Activated CD8-positive, alpha-beta memory T cell treated with anti-CD3 and anti-CD28 coated beads, Interleukin-2, amount 10 ng/mL, durations not matched to agents 7 days and 5 days (primary cell): ENCODE measurements at regions of chr2 and their contacts with region 1.

Region 1: DNA sequence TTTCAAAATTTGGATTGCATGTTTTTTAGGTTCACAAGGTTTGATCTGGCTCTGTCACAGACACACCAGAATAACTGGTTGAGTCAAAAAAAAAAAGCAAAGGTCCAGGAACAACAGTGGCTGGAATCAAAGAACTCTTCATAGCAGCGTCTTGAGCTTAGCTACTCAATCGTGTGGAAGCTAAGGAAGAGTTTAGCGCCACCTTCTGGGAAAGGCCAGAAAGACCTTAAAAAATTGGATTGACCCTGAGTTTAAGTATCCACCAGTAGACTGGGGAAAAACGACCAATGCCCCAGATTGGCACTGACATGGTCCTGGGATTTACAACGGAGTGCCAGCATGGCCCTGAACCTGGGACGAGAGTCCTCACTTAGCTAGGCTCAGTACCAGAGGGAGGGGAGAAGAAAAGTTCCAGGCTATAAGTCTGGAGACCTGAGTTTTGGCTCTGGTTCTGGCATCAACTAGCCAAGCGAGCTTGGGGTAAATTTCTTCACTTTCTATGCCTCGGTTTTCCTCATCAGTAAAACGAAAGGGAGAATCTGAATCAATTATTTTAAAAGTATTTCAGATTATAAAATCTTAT is 71.1 kb upstream of the TFCP2L1 start:
- DNase-seq: no peak
- ATAC-seq: peak; percentile 58
- H3K4me3 Mint-ChIP-seq: no peak overlapping the region
- H3K27ac Mint-ChIP-seq: no peak overlapping the region
- H3K4me1 Mint-ChIP-seq: peaks cover 6% of the 10 kb centered on the region
- H3K27me3 Mint-ChIP-seq: no peaks in the 10 kb centered on the region

Region 2: DNA sequence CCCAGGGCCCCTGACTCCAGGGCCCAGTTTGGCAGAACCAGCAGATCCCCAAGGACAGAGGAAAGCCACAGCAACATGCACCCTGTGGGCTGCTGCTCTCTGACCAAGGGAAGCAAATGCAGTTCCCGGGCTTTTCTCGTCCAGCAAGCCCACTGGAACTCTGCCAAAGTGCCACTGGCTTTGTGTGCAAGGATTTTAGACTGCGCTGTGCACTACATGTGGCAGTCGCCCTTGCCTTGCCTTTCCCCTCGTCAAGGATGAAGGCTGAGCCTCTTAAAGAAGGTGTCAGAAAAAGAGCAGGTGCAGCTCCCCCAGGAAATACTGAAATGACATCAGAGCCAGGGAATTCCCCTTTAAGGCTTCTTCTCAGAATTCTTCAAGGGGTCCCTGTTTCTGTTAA is 270.3 kb before region 1 on chr2:
- CTCF ChIA-PET with region 1: interaction called, 17 read pairs
- DNase-seq: no peak
- ATAC-seq: no peak
- H3K4me3 Mint-ChIP-seq: no peak overlapping the region
- H3K27ac Mint-ChIP-seq: no peak overlapping the region
- H3K4me1 Mint-ChIP-seq: peaks cover 2% of the 10 kb centered on the region
- H3K27me3 Mint-ChIP-seq: no peaks in the 10 kb centered on the region

Region 3: DNA sequence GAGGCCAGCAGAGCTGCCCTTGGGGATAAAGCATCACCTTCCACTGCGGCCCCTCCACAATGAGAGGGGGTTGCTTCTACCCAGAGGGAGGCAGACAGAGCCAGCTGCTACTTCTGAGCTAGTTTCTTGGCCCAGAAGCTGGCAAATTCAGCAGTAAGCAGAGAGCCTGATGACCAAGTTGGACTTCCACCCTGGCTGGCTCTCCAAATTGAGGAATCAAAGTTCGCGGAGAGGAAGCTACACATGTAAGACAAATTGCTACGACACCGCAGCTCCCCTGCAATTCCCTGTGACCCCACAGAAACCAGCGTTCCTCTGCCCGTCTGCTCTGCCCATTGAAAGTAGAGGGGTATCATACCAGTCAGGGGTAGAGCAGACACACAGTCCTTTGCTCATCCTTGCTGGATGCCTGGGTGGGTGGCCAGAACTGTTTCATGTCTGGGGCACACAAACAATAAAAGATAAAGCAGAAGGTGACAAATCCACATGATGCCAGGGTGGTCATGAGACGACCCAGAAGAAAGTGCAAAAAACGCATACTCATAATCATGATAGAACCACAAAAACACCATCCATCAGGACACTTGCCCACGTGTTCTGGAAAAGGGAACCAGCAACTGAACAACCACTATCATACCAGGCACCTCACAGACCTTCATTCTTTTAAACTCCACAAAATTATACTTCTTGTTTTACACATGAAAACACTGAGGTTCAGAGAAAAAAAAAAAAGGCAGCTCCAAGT is 76.5 kb before region 1 on chr2:
- CTCF ChIA-PET with region 1: no interaction called
- DNase-seq: no peak
- ATAC-seq: no peak
- H3K4me3 Mint-ChIP-seq: no peak overlapping the region
- H3K27ac Mint-ChIP-seq: no peak overlapping the region
- H3K4me1 Mint-ChIP-seq: peaks cover 4% of the 10 kb centered on the region
- H3K27me3 Mint-ChIP-seq: peaks cover 23% of the 10 kb centered on the region